Cardiac septum (tissue), 1 donor: ENCODE measurements at regions of chr5 and their contacts with region 1.

Region 1: DNA sequence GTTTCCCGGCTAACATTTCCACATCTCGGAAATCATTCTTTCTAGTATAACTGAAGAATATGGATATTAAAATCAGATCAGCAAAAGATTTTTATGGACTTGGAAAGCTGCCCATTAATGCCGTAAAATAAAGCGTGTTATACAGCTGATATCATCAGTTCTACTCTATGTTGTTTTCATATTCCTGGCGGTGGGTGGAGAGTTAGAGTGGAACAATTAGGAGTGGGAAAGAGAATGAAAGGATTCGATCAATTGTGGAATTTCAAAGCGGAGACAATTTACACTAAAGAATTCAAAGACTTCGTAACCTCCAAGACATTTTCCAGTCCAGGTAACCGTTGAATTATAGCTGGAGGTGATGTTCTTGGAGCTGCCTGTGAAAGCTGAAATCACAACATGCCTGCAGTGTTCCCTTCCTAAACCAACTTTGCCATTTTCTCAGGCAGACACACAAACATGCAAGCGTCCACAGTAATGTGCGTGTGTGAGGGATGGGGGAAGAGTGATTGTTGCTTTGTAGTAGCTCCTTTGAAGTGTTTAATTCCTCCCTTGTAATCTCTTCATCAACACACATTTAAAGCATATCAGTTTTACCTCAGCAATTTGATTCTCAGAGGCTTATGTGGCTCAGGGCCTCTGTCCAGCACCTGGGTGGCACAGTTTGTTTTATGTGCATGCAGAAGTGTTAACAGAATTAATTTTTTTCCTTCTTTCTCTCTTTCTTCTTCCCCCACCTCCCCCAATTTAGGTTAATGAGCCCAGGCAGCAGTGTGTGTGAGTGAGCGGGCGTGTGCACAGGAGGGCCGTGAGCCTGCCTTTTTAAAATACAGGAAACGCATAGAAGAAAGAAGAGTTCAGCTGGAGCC is 544.1 kb downstream of the RAB3C start:
- DNase-seq: no peak

Region 2: GRCh38 chr5:58922461-58923171 is 204.3 kb before region 1 on chr5:
- intact Hi-C with region 1: loop called (anchors 10 kb)
- DNase-seq: peak; percentile 84

Region 3: GRCh38 chr5:59039296-59040023 is 87.5 kb before region 1 on chr5:
- intact Hi-C with region 1: loop called (anchors 2 kb)
- DNase-seq: peak; percentile 94

Region 4: DNA sequence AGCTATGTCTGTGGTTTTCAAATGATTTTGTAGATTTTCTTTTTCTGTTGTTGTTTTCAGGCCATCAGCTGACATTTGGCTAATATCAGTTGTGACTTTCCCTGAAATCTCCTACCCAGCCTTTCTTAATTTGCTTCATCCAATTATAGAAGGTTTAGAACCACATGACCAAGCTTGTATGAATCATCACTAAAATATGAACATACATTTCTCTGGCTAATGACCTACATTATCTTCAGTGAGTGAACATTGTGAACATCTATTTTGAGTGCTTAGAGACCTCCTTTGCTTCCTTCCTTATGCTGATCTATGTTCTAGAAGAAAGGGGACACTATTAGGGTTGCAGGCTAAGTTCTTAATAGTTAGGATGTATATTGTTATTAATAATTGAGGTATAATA is 11.6 kb before region 1 on chr5:
- intact Hi-C with region 1: loop called (anchors 1 kb)
- DNase-seq: no peak

Region 5: DNA sequence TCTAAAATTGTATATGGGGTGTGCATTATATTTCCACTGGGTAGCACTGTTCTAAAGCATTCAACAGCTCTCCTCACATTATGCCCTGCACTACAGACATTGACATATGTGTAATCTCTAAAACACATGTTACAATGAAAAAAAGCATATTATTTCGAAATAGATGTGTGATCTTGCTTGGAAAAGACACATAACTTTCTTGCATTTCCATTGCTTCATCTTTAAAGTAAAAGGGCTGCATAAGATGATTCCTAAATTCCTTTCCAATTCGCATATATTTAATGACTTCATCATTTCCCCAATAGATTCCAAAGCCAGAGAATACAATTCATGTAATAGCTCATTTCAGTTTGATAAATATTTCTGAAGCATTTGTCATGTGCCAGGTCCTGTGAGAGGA is 199.7 kb after region 1 on chr5:
- intact Hi-C with region 1: no loop called
- DNase-seq: no peak